Head of caudate nucleus (tissue), 42 donors: ENCODE measurements at regions of chr21 and their contacts with region 1.

Region 1: DNA sequence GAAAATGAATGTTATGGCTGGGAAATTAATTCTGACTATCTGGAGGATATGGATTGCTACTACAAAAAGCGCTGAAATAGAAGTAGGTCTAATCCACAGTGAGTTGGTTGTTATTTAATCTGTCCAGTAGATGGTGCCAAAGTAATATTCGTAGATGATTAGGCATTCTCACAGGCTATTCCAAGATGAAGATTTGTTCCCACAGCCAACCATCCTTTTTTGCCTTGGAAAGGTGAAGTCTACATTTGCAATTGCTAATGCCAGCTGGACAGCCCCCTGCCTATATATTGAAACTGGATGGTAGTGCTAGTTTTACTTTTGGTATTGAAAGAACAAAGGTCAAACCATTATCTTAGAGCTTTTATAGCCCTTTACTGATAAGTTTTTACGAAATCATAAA is 43.8 kb downstream of the RBM11 start:
- DNase-seq: peak in 2 of 42 donors; percentile 16 to 38

Region 2: DNA sequence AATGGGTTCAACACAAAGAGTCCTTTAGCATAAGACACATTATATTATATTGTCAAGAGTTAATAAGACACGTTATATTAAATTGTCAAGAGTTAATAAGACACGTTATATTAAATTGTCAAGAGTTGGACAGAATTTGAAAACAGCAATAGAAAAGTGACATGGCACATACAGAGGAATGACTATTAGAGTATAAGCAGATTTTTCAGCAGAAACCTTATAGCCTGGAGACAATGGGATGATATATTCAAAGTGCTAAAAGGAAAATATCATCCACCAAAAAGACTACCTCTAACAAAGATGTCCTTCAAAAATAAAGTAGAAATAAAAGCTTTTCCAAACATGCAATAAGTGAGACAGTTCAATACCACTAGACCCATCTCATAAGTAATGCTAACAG is 159.2 kb after region 1 on chr21:
- intact Hi-C with region 1: no loop called
- DNase-seq: no peak

Region 3: GRCh38 chr21:14454016-14455009 is 194.6 kb after region 1 on chr21:
- intact Hi-C with region 1: no loop called
- DNase-seq: no peak

Region 4: DNA sequence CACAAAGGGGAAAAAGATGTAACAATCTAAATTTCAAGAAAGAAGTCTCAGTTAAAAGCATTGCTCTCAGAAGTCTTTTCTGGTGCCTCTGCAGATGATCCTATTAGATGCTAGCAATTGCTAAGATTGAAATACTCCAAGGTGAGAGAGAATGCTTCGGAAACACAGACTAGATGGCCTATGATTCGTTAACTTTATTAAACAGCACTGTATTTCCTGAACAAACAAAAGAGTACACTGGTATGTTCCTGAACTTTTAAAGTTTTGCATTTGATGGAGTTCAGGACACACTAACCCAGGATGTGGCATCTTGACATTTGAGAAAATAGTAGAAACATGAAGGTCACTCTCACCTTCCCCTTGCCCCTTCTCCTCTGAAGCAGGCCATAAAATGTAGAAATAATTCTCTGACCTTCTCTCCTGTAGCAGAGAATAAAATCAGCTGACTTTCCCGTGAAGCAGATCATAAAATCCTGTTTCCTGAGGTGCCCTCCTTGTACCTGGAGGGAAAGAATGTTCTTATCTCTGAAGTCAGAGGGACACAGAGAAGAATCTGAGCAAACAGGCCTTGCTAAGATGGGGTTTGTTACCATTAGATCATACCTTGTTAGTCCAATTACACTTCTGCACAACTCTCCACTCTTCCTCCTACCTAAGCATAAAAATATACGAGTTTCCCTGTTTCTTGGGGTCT is 1327.2 kb after region 1 on chr21:
- intact Hi-C with region 1: loop called (anchors 5 kb)
- DNase-seq: no peak